Left ventricle myocardium superior (tissue), 1 donor: ENCODE measurements at regions of chr2 and their contacts with region 1.

Region 1: GRCh38 chr2:30711646-30712085 is 95.6 kb downstream of the CAPN13 start:
- DNase-seq: peak; percentile 76
- ATAC-seq: peak; percentile 61

Region 2: GRCh38 chr2:30165050-30165520 is 546.6 kb before region 1 on chr2:
- intact Hi-C with region 1: loop called (anchors 10 kb)
- DNase-seq: no peak
- ATAC-seq: peak; percentile 83

Region 3: DNA sequence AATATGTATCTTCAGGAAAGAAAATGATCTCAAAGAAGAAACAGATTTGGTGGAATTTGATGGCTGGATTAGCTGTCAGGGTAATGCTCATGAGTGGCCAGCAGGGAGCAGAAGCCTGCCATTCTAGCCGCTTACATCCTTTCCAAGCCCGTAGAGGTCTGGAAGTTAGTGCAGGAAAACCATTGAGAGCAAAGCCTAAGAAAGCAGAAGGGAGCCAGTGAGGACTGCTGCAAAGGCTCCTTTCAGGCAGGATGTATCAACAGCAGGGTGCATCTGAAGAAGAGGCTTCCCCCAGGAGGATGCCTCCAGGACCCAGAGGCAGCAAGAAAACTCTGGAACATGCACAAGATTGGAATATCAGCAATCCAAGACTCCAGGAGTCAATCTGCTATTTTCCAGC is 503.2 kb before region 1 on chr2:
- intact Hi-C with region 1: loop called (anchors 2 kb)
- DNase-seq: peak; percentile 68
- ATAC-seq: peak; percentile 92

Region 4: DNA sequence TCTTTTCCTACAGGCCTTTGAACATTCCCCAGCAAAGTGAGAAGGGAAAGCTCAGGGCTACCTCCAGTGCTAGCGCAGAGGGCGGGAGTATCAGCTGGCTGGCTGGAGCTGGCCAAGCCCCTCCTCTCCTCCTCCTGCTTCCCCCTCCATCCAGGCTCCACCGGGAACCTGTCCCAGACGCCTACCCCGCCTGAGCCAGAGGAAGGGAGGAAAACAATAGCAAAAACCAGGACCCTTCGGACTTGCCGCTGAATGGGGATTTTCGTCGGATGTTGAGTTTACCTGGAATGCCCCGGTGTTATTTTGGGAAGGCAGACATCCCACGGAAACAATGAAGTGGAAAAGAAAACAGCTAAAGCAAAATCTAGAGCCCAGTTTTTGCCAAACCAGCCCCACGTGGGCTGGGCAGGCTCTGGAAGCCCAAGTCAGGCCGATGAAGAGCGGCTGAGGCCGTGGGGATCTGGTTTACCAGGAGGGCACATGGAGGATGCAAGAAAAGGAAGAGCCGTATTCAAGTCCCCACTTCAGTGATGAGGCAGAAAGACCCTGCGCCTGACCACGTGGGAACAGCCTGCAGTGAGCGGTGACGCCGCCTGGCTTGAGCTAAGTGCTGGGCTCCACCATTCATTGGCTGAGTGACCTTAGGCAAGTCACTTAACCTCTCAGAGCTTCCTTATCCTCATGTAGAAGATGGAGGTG is 365.0 kb before region 1 on chr2:
- intact Hi-C with region 1: loop called (anchors 10 kb)
- DNase-seq: peak; percentile 87
- ATAC-seq: peak; percentile 98

Region 5: DNA sequence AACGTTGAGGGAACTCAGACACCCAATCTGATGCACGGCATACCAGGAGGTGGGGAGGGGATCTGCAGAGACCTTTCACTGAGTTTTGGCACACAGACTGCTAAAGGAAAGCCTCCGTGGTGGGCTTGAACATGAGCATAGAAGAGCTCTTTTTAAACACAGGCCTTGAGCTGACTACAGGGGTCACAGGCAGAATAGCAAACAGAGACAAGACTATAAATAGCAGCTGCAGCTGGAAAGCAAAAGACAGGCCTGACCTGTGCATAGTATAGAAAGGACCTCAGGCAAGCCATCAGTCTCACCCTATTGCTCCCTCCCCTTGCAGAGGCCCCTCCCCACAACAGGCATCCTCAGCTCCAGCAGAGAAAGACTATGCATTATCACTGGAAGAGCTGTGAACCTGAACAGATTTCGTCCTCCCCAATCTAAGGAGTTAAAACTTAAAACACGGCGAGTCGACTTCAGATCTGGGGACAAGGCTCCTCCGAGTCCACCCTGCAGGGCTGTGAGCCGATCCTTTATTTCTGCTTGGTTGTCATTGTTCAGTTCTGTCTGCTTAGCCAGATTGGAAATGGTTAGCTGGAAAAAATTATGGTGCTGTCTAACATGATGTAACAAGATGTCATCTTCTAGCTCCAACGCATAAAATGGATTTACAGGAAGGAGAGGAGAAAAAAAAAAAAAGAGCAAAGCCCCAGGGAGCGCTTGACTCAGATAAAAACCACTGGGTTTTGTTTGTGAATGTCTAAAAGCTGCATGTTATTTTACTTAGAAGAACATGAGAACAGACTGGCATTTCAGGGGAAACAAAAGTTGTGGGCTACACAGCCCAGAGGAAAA is 289.8 kb before region 1 on chr2:
- intact Hi-C with region 1: no loop called
- DNase-seq: no peak
- ATAC-seq: peak; percentile 87

Region 6: GRCh38 chr2:31170071-31170698 is 458.5 kb after region 1 on chr2:
- intact Hi-C with region 1: loop called (anchors 5 kb)
- DNase-seq: peak; percentile 62
- ATAC-seq: peak; percentile 90

Region 7: GRCh38 chr2:31333527-31334183 is 622.0 kb after region 1 on chr2:
- intact Hi-C with region 1: loop called (anchors 5 kb)
- DNase-seq: peak; percentile 79
- ATAC-seq: peak; percentile 84